T-cell (primary cell): ENCODE measurements at regions of chr2 and their contacts with region 1.

Region 1: GRCh38 chr2:205107810-205108209 is 562.5 kb downstream of the PARD3B start:
- DNase-seq: no peak
- ATAC-seq: no peak
- H3K4me3 ChIP-seq: no peak overlapping the region
- H3K4me3 Mint-ChIP-seq: no peak overlapping the region
- H3K27ac ChIP-seq: no peak overlapping the region
- H3K27ac Mint-ChIP-seq: no peak overlapping the region
- H3K4me1 ChIP-seq: peaks cover 0 to 2% of the 10 kb centered on the region in 2 experiments
- H3K4me1 Mint-ChIP-seq: peaks cover 0 to 2% (median 0%) of the 10 kb centered on the region in 3 donors
- H3K27me3 ChIP-seq: no peaks in the 10 kb centered on the region
- H3K27me3 Mint-ChIP-seq: no peaks in the 10 kb centered on the region

Region 2: GRCh38 chr2:205066081-205066480 is 41.7 kb before region 1 on chr2:
- CTCF ChIA-PET with region 1: no interaction called
- POLR2A ChIA-PET with region 1: no interaction called
- DNase-seq: no peak
- ATAC-seq: no peak
- H3K4me3 ChIP-seq: no peak overlapping the region
- H3K4me3 Mint-ChIP-seq: no peak overlapping the region
- H3K27ac ChIP-seq: no peak overlapping the region
- H3K27ac Mint-ChIP-seq: no peak overlapping the region
- H3K4me1 ChIP-seq: no peaks in the 10 kb centered on the region
- H3K4me1 Mint-ChIP-seq: peaks cover 0 to 2% (median 0%) of the 10 kb centered on the region in 3 donors
- H3K27me3 ChIP-seq: no peaks in the 10 kb centered on the region
- H3K27me3 Mint-ChIP-seq: no peaks in the 10 kb centered on the region

Region 3: GRCh38 chr2:205077159-205077558 is 30.7 kb before region 1 on chr2:
- CTCF ChIA-PET with region 1: no interaction called
- POLR2A ChIA-PET with region 1: no interaction called
- DNase-seq: peak in 8 of 35 experiments; percentile 0 to 57 (median 7)
- ATAC-seq: peak; percentile 82 to 92 (median 90)
- H3K4me3 ChIP-seq: peak overlapping the region; percentile 6 to 23
- H3K4me3 Mint-ChIP-seq: peak overlapping the region; percentile 50 to 55 (median 54)
- H3K27ac ChIP-seq: peak overlapping the region; percentile 69
- H3K27ac Mint-ChIP-seq: peak overlapping the region; percentile 97
- H3K4me1 ChIP-seq: peaks cover 13 to 41% of the 10 kb centered on the region in 2 experiments
- H3K4me1 Mint-ChIP-seq: peaks cover 44 to 61% (median 53%) of the 10 kb centered on the region in 3 donors
- H3K27me3 ChIP-seq: no peaks in the 10 kb centered on the region
- H3K27me3 Mint-ChIP-seq: no peaks in the 10 kb centered on the region

Region 4: DNA sequence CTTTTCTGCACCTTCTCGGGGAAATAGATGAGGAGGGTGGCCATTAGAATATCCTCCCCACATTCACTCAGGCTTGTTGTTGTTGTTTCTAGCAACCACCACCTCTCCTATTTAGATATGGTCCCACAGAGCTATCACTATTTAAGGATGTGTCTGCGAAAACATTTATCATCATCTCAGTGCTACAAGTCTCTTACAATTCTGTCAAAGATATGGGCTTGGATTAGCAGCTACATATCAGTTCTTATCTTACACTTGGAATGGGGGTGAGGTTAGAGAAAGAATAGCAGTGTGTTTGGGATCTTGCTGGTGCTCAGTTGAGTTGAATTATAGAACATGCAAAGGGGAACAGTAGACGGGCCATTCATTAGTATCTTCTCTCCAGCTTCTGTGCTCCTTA is 16.4 kb before region 1 on chr2:
- CTCF ChIA-PET with region 1: interaction called in 1 of 2 experiments, 10 read pairs
- POLR2A ChIA-PET with region 1: no interaction called
- DNase-seq: no peak
- ATAC-seq: no peak
- H3K4me3 ChIP-seq: no peak overlapping the region
- H3K4me3 Mint-ChIP-seq: no peak overlapping the region
- H3K27ac ChIP-seq: no peak overlapping the region
- H3K27ac Mint-ChIP-seq: no peak overlapping the region
- H3K4me1 ChIP-seq: peaks cover 3 to 13% of the 10 kb centered on the region in 2 experiments
- H3K4me1 Mint-ChIP-seq: peaks cover 21 to 34% (median 32%) of the 10 kb centered on the region in 3 donors
- H3K27me3 ChIP-seq: no peaks in the 10 kb centered on the region
- H3K27me3 Mint-ChIP-seq: no peaks in the 10 kb centered on the region

Region 5: DNA sequence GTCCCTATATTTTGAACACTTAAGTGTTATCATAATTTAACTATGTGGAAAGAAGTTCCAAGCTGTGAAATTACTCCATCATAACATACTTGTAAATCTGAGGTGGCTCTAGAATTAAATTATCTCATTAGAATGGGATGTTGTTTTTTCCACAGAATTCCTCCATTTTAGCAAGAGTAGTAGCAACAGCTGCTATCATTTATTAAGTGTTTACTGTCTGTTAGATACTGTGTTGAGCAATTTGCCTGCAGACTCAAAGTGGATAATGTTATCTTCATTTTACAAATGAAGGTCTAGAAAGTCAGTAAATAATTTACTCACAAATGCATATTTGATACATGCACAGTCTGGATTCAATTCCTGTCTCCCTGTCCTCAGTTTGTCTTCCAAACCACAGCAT is 69.7 kb after region 1 on chr2:
- CTCF ChIA-PET with region 1: no interaction called
- POLR2A ChIA-PET with region 1: no interaction called
- DNase-seq: no peak
- ATAC-seq: no peak
- H3K4me3 ChIP-seq: no peak overlapping the region
- H3K4me3 Mint-ChIP-seq: no peak overlapping the region
- H3K27ac ChIP-seq: no peak overlapping the region
- H3K27ac Mint-ChIP-seq: no peak overlapping the region
- H3K4me1 ChIP-seq: no peaks in the 10 kb centered on the region
- H3K4me1 Mint-ChIP-seq: no peaks in the 10 kb centered on the region
- H3K27me3 ChIP-seq: no peaks in the 10 kb centered on the region
- H3K27me3 Mint-ChIP-seq: peaks cover 0 to 3% of the 10 kb centered on the region in 2 donors